ENCODE measurements at regions of chr4 and their contacts with region 1.

Region 1: DNA sequence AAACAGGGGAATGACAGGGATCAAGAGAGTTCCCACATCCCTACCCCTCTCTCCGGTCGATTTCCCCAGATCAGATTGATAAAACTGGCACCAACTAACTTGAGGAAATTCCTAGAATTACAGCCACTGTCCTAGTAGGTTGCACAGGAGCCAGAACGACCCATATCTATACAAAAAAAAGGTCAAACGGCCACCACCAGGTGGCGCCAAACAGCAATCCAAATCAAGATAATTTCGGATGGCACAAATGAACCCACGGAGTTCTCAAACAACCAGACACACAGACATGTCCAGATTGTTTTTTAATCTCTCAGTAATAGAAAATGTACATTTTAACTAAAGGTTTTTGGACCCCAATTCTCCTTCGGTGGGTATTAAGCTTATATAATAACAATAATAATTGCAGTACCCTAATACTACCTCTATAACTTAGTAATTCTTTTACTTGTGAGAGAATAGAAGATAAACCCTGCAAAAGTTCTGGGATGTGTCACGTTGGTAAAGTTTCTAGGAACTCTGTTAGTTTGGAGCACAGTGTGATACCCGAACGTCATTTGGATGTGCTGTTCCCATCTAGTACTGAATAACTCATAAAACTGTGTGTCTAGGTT is 212.6 kb downstream of the SPOCK3 start:
- DNase-seq: peak; percentile 67
- H3K4me3 ChIP-seq: no peak overlapping the region
- H3K27ac ChIP-seq: no peak overlapping the region
- H3K4me1 ChIP-seq: no peaks in the 10 kb centered on the region
- H3K27me3 ChIP-seq: no peaks in the 10 kb centered on the region
- CTCF ChIP-seq: peak; percentile 86

Region 2: DNA sequence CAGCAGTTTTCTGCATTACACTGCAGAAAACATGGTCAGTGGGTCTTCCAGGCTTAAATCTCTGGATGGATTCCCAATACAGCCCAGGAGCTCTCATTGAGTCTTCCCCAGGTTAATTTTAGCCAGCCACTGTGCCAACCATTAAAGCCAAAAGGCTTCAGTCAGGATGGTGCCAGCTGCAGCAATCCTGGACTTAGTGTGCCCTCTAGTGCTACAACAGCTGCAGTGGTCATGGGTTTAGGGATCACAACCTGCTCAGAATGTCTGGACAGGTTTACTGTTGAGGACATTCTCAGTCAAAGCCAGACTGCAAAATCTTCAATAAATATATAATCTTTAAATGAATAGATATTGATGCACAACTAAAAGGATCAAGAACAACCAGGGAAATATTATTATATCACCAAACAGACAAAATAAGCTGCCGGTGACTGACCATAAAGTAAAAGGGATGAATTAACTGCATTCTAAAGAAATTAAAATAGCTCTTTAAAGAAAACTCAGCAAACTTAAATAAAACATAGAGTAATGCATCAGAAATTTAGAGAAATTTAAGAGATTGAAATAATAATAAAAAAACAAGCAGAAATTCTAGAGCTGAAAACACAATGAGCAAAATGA is 427.2 kb before region 1 on chr4:
- intact Hi-C with region 1: no loop called
- DNase-seq: peak; percentile 31
- H3K4me3 ChIP-seq: no peak overlapping the region
- H3K27ac ChIP-seq: no peak overlapping the region
- H3K4me1 ChIP-seq: no peaks in the 10 kb centered on the region
- H3K27me3 ChIP-seq: no peaks in the 10 kb centered on the region
- CTCF ChIP-seq: peak; percentile 32

Region 3: GRCh38 chr4:167290678-167291077 is 269.0 kb after region 1 on chr4:
- intact Hi-C with region 1: loop called (anchors 10 kb)
- DNase-seq: no peak
- H3K4me3 ChIP-seq: no peak overlapping the region
- H3K27ac ChIP-seq: no peak overlapping the region
- H3K4me1 ChIP-seq: no peaks in the 10 kb centered on the region
- H3K27me3 ChIP-seq: no peaks in the 10 kb centered on the region
- CTCF ChIP-seq: no peak

Region 4: GRCh38 chr4:168076989-168077725 is 1055.5 kb after region 1 on chr4:
- intact Hi-C with region 1: loop called (anchors 10 kb)
- DNase-seq: peak; percentile 54
- H3K4me3 ChIP-seq: no peak overlapping the region
- H3K27ac ChIP-seq: no peak overlapping the region
- H3K4me1 ChIP-seq: no peaks in the 10 kb centered on the region
- H3K27me3 ChIP-seq: no peaks in the 10 kb centered on the region
- CTCF ChIP-seq: peak; percentile 76

Region 5: GRCh38 chr4:168153596-168154440 is 1132.2 kb after region 1 on chr4:
- intact Hi-C with region 1: loop called (anchors 10 kb)
- DNase-seq: peak; percentile 78
- H3K4me3 ChIP-seq: no peak overlapping the region
- H3K27ac ChIP-seq: no peak overlapping the region
- H3K4me1 ChIP-seq: no peaks in the 10 kb centered on the region
- H3K27me3 ChIP-seq: no peaks in the 10 kb centered on the region
- CTCF ChIP-seq: peak; percentile 44

Measured in colonic mucosa (tissue), 4 donors.